ENCODE measurements at regions of chr13 and their contacts with region 1.

Region 1: DNA sequence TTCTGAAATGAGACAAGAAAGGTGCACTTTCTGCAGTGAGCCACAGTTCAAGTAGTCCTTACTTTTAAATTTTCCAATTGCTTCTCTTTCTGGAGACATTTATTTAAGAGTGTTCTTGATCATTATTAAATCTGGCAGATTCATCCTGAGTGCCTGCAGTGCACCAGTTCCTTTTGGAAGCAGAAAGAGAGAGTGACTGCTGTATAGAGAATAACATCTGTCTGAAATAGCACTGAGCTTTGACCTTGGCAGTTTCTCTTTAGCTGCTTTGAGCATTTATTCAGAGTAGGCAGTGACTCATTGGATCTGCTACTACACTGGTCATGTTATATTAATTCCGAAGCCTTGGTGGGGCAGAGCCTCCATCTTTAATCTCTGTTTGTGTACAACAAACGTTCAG is 1373.7 kb downstream of the PCDH9 start:
- DNase-seq: no peak
- ATAC-seq: no peak
- H3K4me3 ChIP-seq: no peak overlapping the region
- H3K4me3 Mint-ChIP-seq: no peak overlapping the region
- H3K27ac ChIP-seq: no peak overlapping the region
- H3K27ac Mint-ChIP-seq: no peak overlapping the region
- H3K4me1 ChIP-seq: no peaks in the 10 kb centered on the region
- H3K4me1 Mint-ChIP-seq: no peaks in the 10 kb centered on the region
- H3K27me3 ChIP-seq: no peaks in the 10 kb centered on the region
- H3K27me3 Mint-ChIP-seq: no peaks in the 10 kb centered on the region
- CTCF ChIP-seq: no peak

Region 2: GRCh38 chr13:65868889-65869288 is 12.5 kb after region 1 on chr13:
- CTCF ChIA-PET with region 1: no interaction called
- POLR2A ChIA-PET with region 1: no interaction called
- intact Hi-C with region 1: no loop called
- DNase-seq: no peak
- ATAC-seq: no peak
- H3K4me3 ChIP-seq: no peak overlapping the region
- H3K4me3 Mint-ChIP-seq: no peak overlapping the region
- H3K27ac ChIP-seq: no peak overlapping the region
- H3K27ac Mint-ChIP-seq: no peak overlapping the region
- H3K4me1 ChIP-seq: no peaks in the 10 kb centered on the region
- H3K4me1 Mint-ChIP-seq: no peaks in the 10 kb centered on the region
- H3K27me3 ChIP-seq: no peaks in the 10 kb centered on the region
- H3K27me3 Mint-ChIP-seq: no peaks in the 10 kb centered on the region
- CTCF ChIP-seq: no peak

Region 3: DNA sequence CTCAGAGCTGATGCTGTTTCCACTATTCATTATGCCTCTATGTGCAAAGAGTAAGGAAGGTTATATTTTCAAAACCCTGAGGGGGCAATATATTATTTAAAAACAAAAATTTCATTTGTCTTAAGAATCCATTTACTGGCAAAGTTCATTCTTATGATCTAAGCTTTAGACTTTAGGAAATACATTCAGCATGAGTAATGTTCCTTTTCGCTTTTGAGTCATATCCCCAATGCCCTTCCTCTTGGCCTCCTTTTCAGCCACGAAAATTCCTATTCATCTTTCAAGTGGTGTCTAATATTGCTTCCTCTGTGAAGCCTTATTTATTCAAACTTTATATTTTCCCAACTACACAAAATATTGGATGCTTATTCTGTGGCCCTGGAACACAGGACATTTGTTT is 56.7 kb after region 1 on chr13:
- CTCF ChIA-PET with region 1: no interaction called
- POLR2A ChIA-PET with region 1: no interaction called
- intact Hi-C with region 1: loop called in 1 of 2 experiments (anchors 10 kb)
- DNase-seq: no peak
- ATAC-seq: no peak
- H3K4me3 ChIP-seq: no peak overlapping the region
- H3K4me3 Mint-ChIP-seq: no peak overlapping the region
- H3K27ac ChIP-seq: no peak overlapping the region
- H3K27ac Mint-ChIP-seq: no peak overlapping the region
- H3K4me1 ChIP-seq: no peaks in the 10 kb centered on the region
- H3K4me1 Mint-ChIP-seq: no peaks in the 10 kb centered on the region
- H3K27me3 ChIP-seq: no peaks in the 10 kb centered on the region
- H3K27me3 Mint-ChIP-seq: no peaks in the 10 kb centered on the region
- CTCF ChIP-seq: no peak

Measured in CD4-positive, alpha-beta T cell (primary cell).